ENCODE measurements at regions of chr5 and their contacts with region 1.

Region 1: DNA sequence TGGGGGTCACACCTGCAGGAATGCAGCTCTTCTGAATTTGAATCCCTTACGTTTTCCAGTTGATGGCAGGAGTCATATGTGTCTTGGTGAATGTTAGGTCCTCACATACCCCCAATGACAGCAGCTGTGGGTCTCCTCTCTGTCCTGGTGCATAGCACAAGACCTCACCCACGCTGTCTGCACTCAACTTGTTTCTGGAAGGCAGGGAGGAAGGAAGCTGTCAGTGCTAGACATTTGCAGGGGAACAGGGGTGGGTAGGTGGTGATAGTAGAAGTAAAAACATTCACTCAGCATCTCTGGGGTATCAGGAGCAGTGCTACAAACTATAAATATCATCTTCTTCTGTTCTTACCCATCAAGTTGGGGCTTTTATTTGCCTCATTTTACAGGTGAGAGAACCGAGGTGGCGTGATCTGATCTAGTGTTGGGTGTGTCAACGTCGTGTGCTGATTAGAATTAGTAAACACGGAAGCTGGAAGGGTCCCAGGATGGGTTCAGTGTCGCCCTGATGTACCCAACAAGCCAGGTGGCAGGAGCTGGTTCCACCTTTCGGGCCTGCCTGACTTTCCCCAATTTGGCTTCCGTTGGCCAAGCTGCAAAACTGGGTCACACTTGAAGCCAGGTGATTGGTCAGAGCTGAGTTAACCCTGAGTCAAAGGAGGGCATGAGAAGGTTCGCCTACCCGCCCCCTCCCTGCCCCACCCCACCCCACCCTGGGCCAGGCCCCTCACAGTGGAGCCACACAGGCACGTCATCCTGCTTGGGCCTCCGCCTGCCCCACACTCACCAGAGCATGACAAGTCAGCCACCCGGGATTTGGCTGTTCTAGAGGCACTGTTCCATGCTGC is 15.8 kb downstream of the ERGIC1 start:
- DNase-seq: no peak
- H3K4me3 ChIP-seq: no peak overlapping the region
- H3K27ac ChIP-seq: no peak overlapping the region
- H3K4me1 ChIP-seq: peaks cover 71% of the 10 kb centered on the region
- H3K27me3 ChIP-seq: no peaks in the 10 kb centered on the region
- CTCF ChIP-seq: no peak

Region 2: DNA sequence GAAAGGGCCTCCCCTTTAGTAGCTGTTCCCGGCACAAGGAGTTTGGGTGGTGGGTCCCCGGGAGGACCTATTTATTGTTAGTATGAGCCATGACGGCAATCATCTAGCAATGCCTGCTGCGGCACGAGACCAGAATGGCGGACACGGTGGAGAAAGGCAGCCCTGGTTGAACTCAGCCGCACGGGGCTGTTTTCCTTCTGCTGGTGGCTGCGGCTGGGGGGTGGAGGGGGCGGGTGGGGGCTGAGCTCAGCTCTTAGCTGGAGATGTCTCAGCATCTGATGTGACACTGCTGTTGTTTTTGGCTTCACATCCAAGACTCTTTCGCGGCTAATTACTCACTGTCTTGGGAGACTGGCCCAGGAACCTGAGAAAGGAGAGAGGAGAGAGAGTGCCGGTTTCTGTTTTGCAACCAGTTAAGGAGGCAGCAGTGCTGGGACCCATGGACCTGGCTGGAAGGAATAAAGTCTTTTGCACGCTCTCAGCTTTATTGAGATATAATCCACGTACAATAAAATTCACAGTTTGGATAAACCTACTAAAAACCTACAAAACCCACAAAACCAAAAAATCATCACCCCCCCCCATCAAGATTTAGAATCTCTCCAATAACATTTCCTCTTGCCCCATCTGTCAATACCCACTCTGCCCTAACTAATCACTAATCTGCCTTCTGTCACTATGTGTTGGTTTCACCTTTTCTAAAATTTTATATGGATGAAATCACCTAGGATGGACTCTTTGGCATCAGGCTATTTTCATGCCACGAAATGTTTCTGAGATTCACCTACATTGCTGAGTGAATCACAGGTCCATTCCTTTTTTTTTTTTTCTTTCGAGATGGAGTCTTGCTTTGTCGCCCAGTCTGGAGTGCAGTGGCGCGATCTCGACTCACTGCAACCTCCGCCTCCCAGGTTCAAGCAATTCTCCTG is 290.6 kb before region 1 on chr5:
- intact Hi-C with region 1: no loop called
- DNase-seq: peak; percentile 71
- H3K4me3 ChIP-seq: peak overlapping the region; percentile 41
- H3K27ac ChIP-seq: peak overlapping the region; percentile 87
- H3K4me1 ChIP-seq: peaks cover 48% of the 10 kb centered on the region
- H3K27me3 ChIP-seq: no peaks in the 10 kb centered on the region
- CTCF ChIP-seq: no peak

Region 3: DNA sequence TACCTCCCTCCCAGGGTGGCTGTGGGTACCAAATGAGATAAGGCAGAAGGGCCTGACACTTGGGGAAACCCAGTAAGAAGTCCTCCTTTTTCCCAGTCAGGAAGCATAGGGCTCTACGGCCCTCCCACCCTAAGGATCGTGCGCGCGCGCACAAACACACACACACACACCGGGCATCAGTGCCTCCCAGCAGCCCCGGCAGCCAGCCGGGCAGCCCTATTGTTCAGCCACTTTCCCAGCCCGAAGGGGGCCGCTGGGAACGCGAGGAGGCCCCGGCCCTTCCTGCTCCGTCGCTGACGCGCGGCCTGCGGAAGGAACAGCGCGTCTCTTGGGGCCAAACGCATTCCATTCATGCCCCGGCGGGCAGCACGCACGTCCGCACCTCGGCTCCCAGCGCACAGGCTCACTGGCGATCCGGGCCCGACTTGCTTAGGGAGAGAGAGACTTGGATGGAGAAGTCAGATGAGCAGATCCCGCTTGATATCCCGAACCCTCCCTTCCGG is 101.4 kb before region 1 on chr5:
- intact Hi-C with region 1: no loop called
- DNase-seq: peak; percentile 90
- H3K4me3 ChIP-seq: peak overlapping the region; percentile 43
- H3K27ac ChIP-seq: peak overlapping the region; percentile 98
- H3K4me1 ChIP-seq: peaks cover 91% of the 10 kb centered on the region
- H3K27me3 ChIP-seq: no peaks in the 10 kb centered on the region
- CTCF ChIP-seq: peak; percentile 19

Region 4: DNA sequence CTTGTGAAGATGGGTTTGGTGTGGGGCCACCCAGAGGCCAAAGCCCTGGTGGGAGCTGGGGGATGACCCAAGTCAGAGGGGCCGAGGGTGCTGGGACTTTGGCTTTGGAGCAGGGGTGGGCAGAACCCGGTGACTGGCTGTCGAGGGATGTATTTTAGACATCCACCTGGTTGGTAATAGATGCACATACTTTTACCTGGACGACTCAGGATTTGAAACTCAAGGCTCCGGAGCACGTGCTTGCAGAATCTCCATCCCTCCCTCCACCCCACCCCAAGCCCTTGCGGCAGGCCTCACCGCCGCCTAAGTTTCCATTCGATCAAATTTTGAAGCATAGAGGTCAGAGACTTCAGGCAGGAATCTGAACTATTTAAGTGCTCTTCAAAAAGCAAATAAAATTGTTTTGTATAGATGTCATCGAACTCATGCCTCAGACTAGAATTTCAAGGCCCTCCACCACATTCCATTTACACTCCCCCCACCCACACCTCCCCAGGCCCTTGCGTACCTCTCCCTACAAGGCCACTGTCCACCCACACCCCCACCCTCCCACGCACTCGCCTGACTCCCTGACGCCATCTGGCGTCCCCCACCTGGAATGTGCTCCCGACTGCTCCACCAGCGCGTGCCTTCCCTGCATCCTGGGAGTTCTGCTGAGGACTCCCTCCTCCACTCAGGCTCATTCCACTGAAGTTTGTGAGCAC is 52.8 kb after region 1 on chr5:
- intact Hi-C with region 1: loop called (anchors 10 kb)
- DNase-seq: peak; percentile 81
- H3K4me3 ChIP-seq: no peak overlapping the region
- H3K27ac ChIP-seq: peak overlapping the region; percentile 92
- H3K4me1 ChIP-seq: peaks cover 88% of the 10 kb centered on the region
- H3K27me3 ChIP-seq: no peaks in the 10 kb centered on the region
- CTCF ChIP-seq: peak; percentile 62

Measured in left ventricle myocardium inferior (tissue), 1 donor.